ENCODE measurements at regions of chr15 and their contacts with region 1.

Region 1: GRCh38 chr15:66386204-66387123 is at the start of gene MAP2K1:
- DNase-seq: peak; percentile 100
- H3K4me3 ChIP-seq: peak within 1 kb of the TSS; percentile 90
- H3K4me1 ChIP-seq: peaks cover 27% of the 10 kb centered on the region
- H3K27me3 ChIP-seq: no peaks in the 10 kb centered on the region

Region 2: DNA sequence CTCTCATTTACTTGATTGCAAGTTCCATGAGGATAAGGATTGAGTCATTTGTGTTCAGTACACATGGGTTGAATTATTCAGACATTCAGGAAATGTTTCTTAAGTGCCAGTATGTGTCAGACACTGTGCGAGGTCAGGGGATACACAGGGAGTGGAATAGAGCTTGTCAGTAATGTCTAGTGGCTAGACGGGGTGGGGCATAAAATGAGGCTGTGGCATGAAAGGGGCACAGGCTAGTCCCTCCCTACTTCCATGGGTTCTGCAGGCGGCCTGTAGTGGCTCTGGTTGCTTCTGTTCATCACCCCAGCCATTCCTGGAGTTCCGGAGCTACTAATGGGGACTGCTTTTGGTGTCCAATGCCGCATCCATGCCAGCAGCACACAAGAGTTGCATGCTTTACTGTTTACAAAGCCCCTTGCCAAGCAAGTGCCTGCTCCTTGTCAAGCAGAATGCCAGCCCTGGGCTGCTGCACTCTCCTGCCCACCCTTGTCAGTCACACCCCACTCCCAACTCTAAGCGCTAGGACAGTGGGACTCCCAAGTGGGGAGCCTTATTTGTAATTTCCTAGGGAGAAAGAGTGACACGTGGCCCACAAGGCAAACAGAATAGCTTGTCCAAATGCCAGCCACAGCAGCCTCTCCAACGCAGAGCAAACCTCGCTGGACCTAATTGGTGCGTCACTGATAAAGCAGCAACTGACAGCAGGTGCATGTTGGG is 446.4 kb before region 1 on chr15:
- in situ Hi-C with region 1: no loop called
- DNase-seq: no peak
- H3K4me3 ChIP-seq: no peak overlapping the region
- H3K4me1 ChIP-seq: no peaks in the 10 kb centered on the region
- H3K27me3 ChIP-seq: peaks cover 19% of the 10 kb centered on the region; the same call in 1 of the 2 replicates

Region 3: GRCh38 chr15:66327736-66328135 is 58.7 kb before region 1 on chr15:
- in situ Hi-C with region 1: no loop called
- DNase-seq: no peak
- H3K4me3 ChIP-seq: no peak overlapping the region
- H3K4me1 ChIP-seq: peaks cover 14% of the 10 kb centered on the region
- H3K27me3 ChIP-seq: no peaks in the 10 kb centered on the region

Region 4: GRCh38 chr15:66497502-66498455 is 111.3 kb after region 1 on chr15 and contains the start of gene SNAPC5:
- in situ Hi-C with region 1: loop called (anchors 5 kb)
- DNase-seq: peak; percentile 98 to 100
- H3K4me3 ChIP-seq: peak within 1 kb of the TSS; percentile 87
- H3K4me1 ChIP-seq: peaks cover 16% of the 10 kb centered on the region
- H3K27me3 ChIP-seq: no peaks in the 10 kb centered on the region

Measured in HAP-1 (cell line).